Common myeloid progenitor, CD34-positive (primary cell): ENCODE measurements at regions of chr15 and their contacts with region 1.

Region 1: GRCh38 chr15:89496155-89497098 is at the start of gene RHCG:
- DNase-seq: peak; percentile 68 to 78 (median 69)
- H3K4me3 ChIP-seq: peak within 1 kb of the TSS; percentile 22 to 75 (median 38)
- H3K27ac ChIP-seq: no peak within 1 kb of the TSS
- H3K4me1 ChIP-seq: peaks cover 0 to 15% (median 12%) of the 10 kb centered on the region in 4 experiments
- H3K27me3 ChIP-seq: peaks cover 10 to 62% (median 24%) of the 10 kb centered on the region in 5 experiments

Region 2: GRCh38 chr15:89483079-89483478 is 13.3 kb before region 1 on chr15:
- CTCF ChIA-PET with region 1: interaction called, 14 read pairs
- POLR2A ChIA-PET with region 1: no interaction called
- DNase-seq: no peak
- H3K4me3 ChIP-seq: no peak overlapping the region
- H3K27ac ChIP-seq: no peak overlapping the region
- H3K4me1 ChIP-seq: peaks cover 0 to 10% (median 6%) of the 10 kb centered on the region in 4 experiments
- H3K27me3 ChIP-seq: peaks cover 0 to 35% (median 17%) of the 10 kb centered on the region in 5 experiments